ENCODE measurements at regions of chr9 and their contacts with region 1.

Region 1: GRCh38 chr9:136363606-136364370 is at the start of gene DNLZ:
- DNase-seq: peak in 1 of 2 donors; percentile 92
- H3K4me3 ChIP-seq: peak within 1 kb of the TSS; percentile 86 to 97
- H3K27ac ChIP-seq: peak within 1 kb of the TSS; percentile 85 to 90
- H3K4me1 ChIP-seq: peaks cover 5 to 8% of the 10 kb centered on the region in 2 donors
- H3K27me3 ChIP-seq: no peaks in the 10 kb centered on the region
- CTCF ChIP-seq: peak; percentile 94 to 99 (median 97)
- total RNA-seq, gene DNLZ: 191 TPM

Region 2: DNA sequence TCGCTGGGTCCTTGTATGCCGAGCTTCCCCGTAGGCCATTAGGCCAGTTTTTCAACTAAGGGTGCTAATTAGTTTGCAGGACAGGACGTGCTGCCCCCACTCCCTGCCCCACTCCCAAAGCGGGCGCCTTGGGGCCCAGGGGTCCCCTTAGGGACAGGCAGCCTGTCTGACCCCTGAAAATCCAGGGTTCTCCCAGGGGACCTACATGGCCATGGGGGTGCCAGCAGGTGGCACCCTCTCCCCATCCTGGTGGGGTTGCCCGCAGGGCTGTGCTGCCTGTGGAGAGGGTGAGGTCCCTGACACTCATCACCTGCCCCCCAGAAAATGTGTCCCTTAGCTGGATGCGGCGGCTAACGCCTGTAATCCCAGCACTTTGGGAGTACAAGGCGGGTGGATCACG is 51.4 kb before region 1 on chr9:
- intact Hi-C with region 1: loop called (anchors 5 kb)
- DNase-seq: no peak
- H3K4me3 ChIP-seq: no peak overlapping the region
- H3K27ac ChIP-seq: no peak overlapping the region
- H3K4me1 ChIP-seq: no peaks in the 10 kb centered on the region
- H3K27me3 ChIP-seq: peaks cover 4% of the 10 kb centered on the region
- CTCF ChIP-seq: peak; percentile 27 to 50 (median 29)

Region 3: DNA sequence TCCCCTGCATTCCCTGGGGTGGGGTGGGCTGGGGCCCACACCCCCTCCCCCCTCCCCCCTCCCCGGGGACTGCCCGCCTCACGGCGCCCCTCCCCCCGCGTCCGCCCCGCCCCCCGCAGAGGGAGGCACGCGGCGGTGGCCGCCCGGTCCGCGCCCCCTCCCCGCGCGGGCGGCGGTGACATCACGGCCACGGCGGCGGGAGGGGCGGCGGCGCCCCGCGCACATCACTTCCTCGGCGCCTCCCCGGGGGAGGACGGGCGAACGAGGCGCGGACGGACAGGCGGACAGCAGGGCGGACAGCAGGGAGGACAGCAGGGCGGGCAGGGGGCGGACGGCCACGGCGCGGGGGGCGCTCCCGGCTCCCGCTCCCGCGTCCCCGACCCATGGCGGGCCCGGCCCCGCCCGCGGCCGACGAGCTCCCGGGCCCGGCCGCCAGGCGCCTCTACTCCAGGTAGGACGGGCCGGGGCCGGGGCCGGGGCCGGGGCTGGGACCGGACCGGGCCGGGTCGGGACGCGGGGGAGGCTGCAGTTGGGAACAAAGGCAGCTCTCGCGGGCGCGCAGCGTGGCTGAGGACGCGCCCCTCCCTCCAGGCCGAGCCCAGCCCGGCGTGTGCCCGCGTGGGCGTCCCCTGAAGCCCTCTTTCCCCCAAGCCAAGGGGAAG is 36.3 kb before region 1 on chr9 and contains the start of gene GPSM1:
- intact Hi-C with region 1: loop called (anchors 1 kb)
- DNase-seq: no peak
- H3K4me3 ChIP-seq: peak within 1 kb of the TSS; percentile 75 to 98
- H3K27ac ChIP-seq: peak within 1 kb of the TSS; percentile 78 to 86
- H3K4me1 ChIP-seq: peaks cover 21 to 27% of the 10 kb centered on the region in 2 donors
- H3K27me3 ChIP-seq: no peaks in the 10 kb centered on the region
- CTCF ChIP-seq: peak in 1 of 3 experiments; percentile 29
- total RNA-seq, gene GPSM1: 85.1 TPM

Region 4: GRCh38 chr9:136345281-136346156 is 18.3 kb before region 1 on chr9:
- intact Hi-C with region 1: loop called (anchors 1 kb)
- DNase-seq: peak; percentile 30 to 86
- H3K4me3 ChIP-seq: peak overlapping the region; percentile 42 to 55
- H3K27ac ChIP-seq: peak overlapping the region; percentile 76 to 79
- H3K4me1 ChIP-seq: peaks cover 15 to 26% of the 10 kb centered on the region in 2 donors
- H3K27me3 ChIP-seq: no peaks in the 10 kb centered on the region
- CTCF ChIP-seq: peak; percentile 52 to 64 (median 63)

Region 5: DNA sequence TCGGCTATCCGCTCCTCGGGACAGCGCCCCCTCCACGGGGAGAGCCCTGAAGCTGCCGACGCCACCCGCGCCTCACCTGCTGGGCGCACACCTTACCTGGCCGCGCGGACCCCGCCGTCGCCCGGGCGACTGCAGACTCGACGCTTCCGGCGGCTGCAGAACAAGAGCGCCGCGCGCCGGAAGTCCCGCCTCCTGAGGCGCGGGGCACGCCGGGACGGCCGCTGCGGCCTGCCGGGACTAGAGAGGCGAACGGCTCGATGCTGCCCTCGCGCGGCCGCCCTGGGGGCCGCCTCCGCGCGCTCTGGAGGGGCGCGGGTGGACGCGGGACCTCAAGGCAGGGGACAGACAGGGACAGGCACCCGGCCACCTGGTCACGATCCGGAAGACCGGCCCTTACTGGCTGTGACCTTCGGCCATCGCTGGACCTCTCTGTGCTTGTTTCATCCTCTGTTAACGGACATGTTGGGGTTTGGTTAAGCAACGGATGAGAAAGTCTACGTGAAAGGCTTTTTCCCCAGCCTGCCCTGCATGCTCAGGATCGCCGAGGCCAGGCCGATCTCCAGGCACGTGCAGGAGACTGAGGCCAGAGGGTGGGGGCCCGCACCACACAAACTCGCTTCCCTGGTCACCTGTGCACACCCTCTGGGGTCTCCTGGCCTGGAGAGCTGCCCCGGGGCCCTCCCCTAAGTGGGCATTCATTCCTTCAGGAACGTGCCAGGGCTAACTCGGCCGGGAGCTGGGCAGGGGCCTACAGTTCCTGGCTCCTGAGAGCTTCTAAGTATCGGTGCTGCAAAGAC is 36.4 kb after region 1 on chr9 and contains the start of gene SNAPC4:
- intact Hi-C with region 1: loop called (anchors 1 kb)
- DNase-seq: peak; percentile 36 to 91
- H3K4me3 ChIP-seq: peak within 1 kb of the TSS; percentile 90 to 97
- H3K27ac ChIP-seq: peak within 1 kb of the TSS; percentile 6 to 50
- H3K4me1 ChIP-seq: peaks cover 10 to 13% of the 10 kb centered on the region in 2 donors
- H3K27me3 ChIP-seq: no peaks in the 10 kb centered on the region
- CTCF ChIP-seq: peak; percentile 85 to 93 (median 92)
- total RNA-seq, gene SNAPC4: 9.4 TPM

Region 6: DNA sequence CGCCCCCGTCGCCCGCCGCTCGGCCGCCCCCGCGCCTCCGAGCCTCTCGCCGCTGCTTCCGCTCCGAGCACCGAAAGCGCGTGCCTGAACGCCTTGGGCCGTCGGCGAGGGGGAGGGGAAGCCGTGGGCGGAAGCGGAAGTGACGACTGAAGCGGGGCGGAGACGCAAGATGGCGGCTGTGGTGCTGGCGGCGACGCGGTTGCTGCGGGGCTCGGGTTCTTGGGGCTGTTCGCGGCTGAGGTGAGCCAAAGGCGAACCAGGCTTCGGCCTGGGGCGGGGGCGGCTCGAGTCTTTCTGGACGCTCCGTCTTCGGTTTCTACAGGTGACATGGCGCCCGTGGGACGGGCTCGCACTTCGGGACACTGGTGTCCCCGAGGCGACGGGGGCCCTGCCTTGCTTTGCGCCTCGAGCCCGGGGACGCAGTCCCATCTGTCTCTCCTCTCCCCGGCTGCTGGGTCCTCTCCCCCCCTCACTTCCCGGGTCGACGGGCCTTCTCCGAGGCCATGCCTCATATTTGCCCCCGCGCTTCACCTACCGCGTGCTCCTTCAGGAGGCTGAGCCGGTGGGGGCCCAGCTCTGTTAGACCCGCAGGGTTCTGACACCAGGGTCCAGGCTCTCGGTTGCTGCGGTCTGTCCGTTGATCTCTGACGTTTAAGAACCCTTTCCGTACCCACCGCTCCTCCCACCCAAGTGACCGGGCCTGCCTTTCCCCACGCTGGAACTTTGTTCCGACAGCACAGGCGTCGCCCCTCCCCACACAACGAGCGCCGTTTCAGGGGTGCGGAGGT is 46.9 kb after region 1 on chr9 and contains the starts of genes ENTR1 and PMPCA:
- intact Hi-C with region 1: loop called (anchors 1 kb)
- DNase-seq: peak; percentile 67 to 96
- H3K4me3 ChIP-seq: peak within 1 kb of the TSS; percentile 72 to 92
- H3K27ac ChIP-seq: peak within 1 kb of the TSS; percentile 77 to 80
- H3K4me1 ChIP-seq: peaks cover 9 to 19% of the 10 kb centered on the region in 2 donors
- H3K27me3 ChIP-seq: no peaks in the 10 kb centered on the region
- CTCF ChIP-seq: no peak
- total RNA-seq, gene ENTR1: 27.7 TPM
- total RNA-seq, gene PMPCA: 69.1 TPM

Region 7: GRCh38 chr9:136512651-136513071 is 148.9 kb after region 1 on chr9:
- intact Hi-C with region 1: no loop called
- DNase-seq: no peak
- H3K4me3 ChIP-seq: no peak overlapping the region
- H3K27ac ChIP-seq: peak overlapping the region; percentile 14 to 49
- H3K4me1 ChIP-seq: no peaks in the 10 kb centered on the region
- H3K27me3 ChIP-seq: no peaks in the 10 kb centered on the region
- CTCF ChIP-seq: no peak

Region 8: GRCh38 chr9:136545966-136546698 is 182.3 kb after region 1 on chr9 and contains the start of gene NOTCH1:
- intact Hi-C with region 1: loop called (anchors 5 kb)
- DNase-seq: peak; percentile 70 to 96
- H3K4me3 ChIP-seq: peak within 1 kb of the TSS; percentile 68 to 96
- H3K27ac ChIP-seq: peak within 1 kb of the TSS; percentile 95 to 98
- H3K4me1 ChIP-seq: peaks cover 24 to 57% of the 10 kb centered on the region in 2 donors
- H3K27me3 ChIP-seq: no peaks in the 10 kb centered on the region
- CTCF ChIP-seq: peak in 1 of 3 experiments; percentile 18
- total RNA-seq, gene NOTCH1: 120 TPM